ENCODE measurements at regions of chr15 and their contacts with region 1.

Region 1: DNA sequence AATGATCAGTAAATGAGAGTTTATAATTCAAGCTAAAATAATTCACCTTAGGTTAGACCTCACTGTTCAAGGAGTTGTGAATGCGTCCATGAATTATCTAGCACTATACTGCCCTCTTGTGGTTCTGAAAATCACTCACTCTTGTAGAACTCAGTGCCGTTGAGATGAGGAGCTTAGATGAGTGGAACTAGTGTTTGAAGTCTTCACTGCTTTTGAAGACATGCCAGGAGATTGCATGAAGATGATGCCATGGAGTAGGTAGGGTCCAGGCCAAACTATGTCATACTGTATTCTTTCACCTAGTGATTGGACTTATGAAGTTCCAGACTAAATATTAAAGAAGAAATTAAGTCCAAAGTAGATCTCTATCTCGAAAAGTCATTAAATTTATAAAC is 28.8 kb downstream of the LYSMD4 start:
- DNase-seq: no peak
- ATAC-seq: peak; percentile 74 to 76

Region 2: DNA sequence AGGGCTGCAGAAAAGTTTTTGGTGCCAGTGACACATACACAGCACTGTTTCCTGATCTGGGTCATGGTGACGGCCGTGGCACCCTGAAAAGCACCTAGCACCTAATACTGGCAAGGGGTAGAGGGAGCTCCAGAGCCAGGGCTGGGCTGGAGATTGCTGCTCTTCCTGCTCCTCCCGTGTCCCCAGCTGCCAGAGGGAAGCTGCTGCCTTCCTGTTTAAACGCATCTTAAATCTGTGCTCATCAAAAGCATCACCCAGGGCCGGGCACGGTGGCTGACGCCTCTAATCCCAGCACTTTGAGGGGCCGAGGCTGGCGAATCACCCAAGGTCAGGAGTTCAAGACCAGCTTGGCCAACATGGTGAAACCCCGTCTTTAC is 295.4 kb before region 1 on chr15:
- intact Hi-C with region 1: loop called in 1 of 2 experiments (anchors 5 kb)
- DNase-seq: peak; percentile 72
- ATAC-seq: peak; percentile 75 to 78